Astrocyte of the cerebellum (primary cell): ENCODE measurements at regions of chr2 and their contacts with region 1.

Region 1: DNA sequence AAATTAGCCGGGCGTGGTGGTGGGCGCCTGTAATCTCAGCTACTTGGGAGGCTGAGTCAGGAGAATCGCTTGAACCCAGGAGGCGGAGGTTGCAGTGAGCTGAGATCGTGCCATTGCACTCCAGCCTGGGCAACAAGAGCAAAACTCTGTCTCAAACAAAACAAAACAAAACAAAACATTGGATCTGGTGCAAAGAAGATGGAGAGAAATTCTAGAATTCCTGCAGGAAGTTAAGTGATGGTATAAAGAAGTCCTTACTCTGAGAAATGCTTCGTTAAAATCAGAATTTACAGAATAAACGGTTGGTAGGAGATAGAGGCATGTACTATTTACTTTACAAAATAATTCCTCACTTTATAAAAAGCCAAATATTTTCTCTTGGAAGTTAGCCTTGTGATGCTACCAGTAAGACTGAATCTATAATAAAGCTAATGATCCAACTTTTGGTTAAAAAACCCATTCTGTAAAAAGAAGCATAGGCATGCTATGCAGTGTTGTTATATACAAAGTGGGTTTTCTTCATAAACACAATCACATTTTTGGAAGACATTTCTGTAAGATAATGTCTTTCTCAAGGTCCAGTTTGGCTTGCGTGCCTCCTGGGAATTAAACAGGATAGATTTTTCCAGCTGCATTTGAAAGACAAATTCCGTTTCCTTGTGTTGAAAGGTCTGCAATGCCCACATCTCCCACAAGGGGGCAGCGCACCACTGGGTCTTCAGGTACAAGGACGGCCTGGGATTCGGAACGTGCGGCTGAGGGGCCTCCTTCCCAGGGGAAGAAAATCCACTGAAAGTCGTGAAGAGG is 35.6 kb upstream of the PNO1 start:
- DNase-seq: peak; percentile 79
- H3K4me3 ChIP-seq: no peak overlapping the region
- CTCF ChIP-seq: peak; percentile 97

Region 2: DNA sequence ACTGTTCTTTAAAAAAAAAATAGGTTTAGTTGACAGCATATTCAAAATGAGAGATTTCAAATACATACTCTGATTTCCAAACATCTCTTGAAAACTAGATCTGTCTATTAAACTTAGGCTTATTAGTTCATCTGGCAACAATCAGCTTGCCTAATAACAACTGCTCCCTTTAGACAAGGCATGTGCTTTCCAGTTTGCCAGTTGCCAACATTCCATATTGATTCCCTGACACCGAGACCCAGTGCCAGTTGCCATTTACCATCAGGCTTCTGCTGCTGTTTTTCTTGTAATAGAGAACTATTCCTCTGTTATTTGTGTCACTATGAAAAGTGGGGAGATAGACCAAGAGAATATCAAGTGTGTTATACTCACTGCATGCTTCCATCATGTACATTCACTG is 315.3 kb before region 1 on chr2:
- in situ Hi-C with region 1: no loop called
- DNase-seq: no peak
- H3K4me3 ChIP-seq: no peak overlapping the region
- CTCF ChIP-seq: no peak

Region 3: DNA sequence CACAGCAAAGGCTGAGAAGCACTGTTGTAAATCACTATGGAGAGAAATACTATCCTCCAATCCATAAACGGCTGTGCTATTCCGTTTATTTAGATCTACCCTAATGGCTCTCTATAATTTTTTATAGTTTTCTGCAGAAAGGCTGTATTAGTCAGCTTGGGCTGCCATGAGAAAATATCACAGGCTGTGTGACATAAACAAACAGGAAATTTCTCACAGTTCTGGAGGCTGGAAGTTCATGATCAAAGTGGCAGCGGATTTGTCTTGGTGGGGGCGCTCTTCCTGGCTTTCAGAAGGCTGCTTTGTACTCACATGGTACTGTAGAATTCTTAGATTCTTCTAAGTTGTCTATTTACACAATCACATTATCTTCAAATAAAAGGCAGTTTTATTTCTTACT is 103.3 kb before region 1 on chr2:
- in situ Hi-C with region 1: no loop called
- DNase-seq: no peak
- H3K4me3 ChIP-seq: no peak overlapping the region
- CTCF ChIP-seq: no peak

Region 4: GRCh38 chr2:68290901-68291300 is 168.8 kb after region 1 on chr2:
- in situ Hi-C with region 1: loop called (anchors 5 kb)
- DNase-seq: no peak
- H3K4me3 ChIP-seq: no peak overlapping the region
- CTCF ChIP-seq: no peak